Heart left ventricle (tissue), 16 donors: ENCODE measurements at regions of chr1 and their contacts with region 1.

Region 1: GRCh38 chr1:248906009-248906752 is at the start of gene PGBD2:
- DNase-seq: peak; percentile 93 to 97 (median 95)
- ATAC-seq: peak; percentile 91 to 97 (median 95)
- H3K4me3 ChIP-seq: peak within 1 kb of the TSS; percentile 53 to 94 (median 78)
- H3K27ac ChIP-seq: peak within 1 kb of the TSS; percentile 88 to 99 (median 95)
- H3K4me1 ChIP-seq: peaks cover 0 to 18% (median 13%) of the 10 kb centered on the region in 12 donors
- H3K27me3 ChIP-seq: peaks cover 0 to 5% (median 0%) of the 10 kb centered on the region in 9 donors
- CTCF ChIP-seq: peak; percentile 44 to 80 (median 62)
- POLR2A ChIP-seq: peak in 1 of 2 donors; percentile 86
- total RNA-seq, gene PGBD2: 1.5 to 3.9 (median 2.6) TPM

Region 2: GRCh38 chr1:248825909-248826760 is 80.0 kb before region 1 on chr1 and contains the start of gene SH3BP5L:
- intact Hi-C with region 1: loop called in 3 of 10 experiments (anchors 1 kb)
- DNase-seq: peak; percentile 93 to 96 (median 95)
- ATAC-seq: peak; percentile 95 to 97 (median 97)
- H3K4me3 ChIP-seq: peak within 1 kb of the TSS; percentile 55 to 89 (median 76)
- H3K27ac ChIP-seq: peak within 1 kb of the TSS; percentile 91 to 99 (median 95)
- H3K4me1 ChIP-seq: peaks cover 19 to 63% (median 48%) of the 10 kb centered on the region in 12 donors
- H3K27me3 ChIP-seq: no peaks in the 10 kb centered on the region
- CTCF ChIP-seq: peak; percentile 23 to 88 (median 64)
- POLR2A ChIP-seq: peak in 1 of 2 donors; percentile 70
- total RNA-seq, gene SH3BP5L: 15.8 to 47.1 (median 19.3) TPM

Region 3: GRCh38 chr1:248858891-248859889 is 47.0 kb before region 1 on chr1 and contains the start of gene ZNF692:
- intact Hi-C with region 1: loop called in 2 of 10 experiments (anchors 1 to 2 kb)
- DNase-seq: peak; percentile 97 to 99 (median 99)
- ATAC-seq: peak; percentile 89 to 93 (median 92)
- H3K4me3 ChIP-seq: peak within 1 kb of the TSS; percentile 45 to 75 (median 65)
- H3K27ac ChIP-seq: peak within 1 kb of the TSS; percentile 60 to 96 (median 92)
- H3K4me1 ChIP-seq: peaks cover 0 to 43% (median 31%) of the 10 kb centered on the region in 12 donors
- H3K27me3 ChIP-seq: no peaks in the 10 kb centered on the region
- CTCF ChIP-seq: peak in 2 of 12 donors; percentile 2 to 4
- POLR2A ChIP-seq: peak in 1 of 2 donors; percentile 85
- total RNA-seq, gene ZNF692: 7.4 to 19.7 (median 14.8) TPM

Region 4: DNA sequence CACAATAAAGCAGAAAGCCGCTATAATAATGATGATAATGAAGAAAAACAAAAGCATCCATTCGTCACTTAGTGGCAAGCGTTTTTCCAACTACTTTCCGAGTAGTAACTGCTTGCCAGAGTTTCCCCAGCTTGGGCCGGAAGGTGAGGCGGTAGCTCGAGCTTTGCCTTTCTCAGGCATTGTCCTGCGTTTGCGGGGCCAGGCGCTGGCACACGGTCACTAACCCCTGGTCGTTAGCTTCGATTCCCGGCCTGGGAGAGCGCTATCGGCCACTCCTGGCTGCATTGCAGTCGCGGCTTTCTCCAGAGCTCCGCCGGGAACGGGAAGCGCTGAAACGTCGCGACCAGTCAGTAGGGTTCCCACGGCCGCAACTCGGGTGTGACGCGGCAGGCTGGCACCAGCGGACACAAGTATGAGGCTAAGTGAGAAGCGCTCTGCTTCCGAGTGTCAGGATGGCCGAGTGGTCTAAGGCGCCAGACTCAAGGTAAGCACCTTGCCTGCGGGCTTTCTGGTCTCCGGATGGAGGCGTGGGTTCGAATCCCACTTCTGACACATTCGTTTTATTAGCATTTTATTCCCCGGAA is 32.7 kb before region 1 on chr1:
- intact Hi-C with region 1: loop called in 3 of 10 experiments (anchors 1 kb)
- DNase-seq: peak; percentile 92 to 95 (median 93)
- ATAC-seq: peak; percentile 92 to 95 (median 94)
- H3K4me3 ChIP-seq: peak overlapping the region; percentile 56 to 84 (median 70)
- H3K27ac ChIP-seq: peak overlapping the region; percentile 88 to 96 (median 93)
- H3K4me1 ChIP-seq: peaks cover 0 to 12% (median 0%) of the 10 kb centered on the region in 12 donors
- H3K27me3 ChIP-seq: no peaks in the 10 kb centered on the region
- CTCF ChIP-seq: no peak
- POLR2A ChIP-seq: peak in 1 of 2 donors; percentile 50